Activated B cell treated with CpG ODN at 0.5 μM for 24 hours (primary cell): ENCODE measurements at regions of chr12 and their contacts with region 1.

Region 1: DNA sequence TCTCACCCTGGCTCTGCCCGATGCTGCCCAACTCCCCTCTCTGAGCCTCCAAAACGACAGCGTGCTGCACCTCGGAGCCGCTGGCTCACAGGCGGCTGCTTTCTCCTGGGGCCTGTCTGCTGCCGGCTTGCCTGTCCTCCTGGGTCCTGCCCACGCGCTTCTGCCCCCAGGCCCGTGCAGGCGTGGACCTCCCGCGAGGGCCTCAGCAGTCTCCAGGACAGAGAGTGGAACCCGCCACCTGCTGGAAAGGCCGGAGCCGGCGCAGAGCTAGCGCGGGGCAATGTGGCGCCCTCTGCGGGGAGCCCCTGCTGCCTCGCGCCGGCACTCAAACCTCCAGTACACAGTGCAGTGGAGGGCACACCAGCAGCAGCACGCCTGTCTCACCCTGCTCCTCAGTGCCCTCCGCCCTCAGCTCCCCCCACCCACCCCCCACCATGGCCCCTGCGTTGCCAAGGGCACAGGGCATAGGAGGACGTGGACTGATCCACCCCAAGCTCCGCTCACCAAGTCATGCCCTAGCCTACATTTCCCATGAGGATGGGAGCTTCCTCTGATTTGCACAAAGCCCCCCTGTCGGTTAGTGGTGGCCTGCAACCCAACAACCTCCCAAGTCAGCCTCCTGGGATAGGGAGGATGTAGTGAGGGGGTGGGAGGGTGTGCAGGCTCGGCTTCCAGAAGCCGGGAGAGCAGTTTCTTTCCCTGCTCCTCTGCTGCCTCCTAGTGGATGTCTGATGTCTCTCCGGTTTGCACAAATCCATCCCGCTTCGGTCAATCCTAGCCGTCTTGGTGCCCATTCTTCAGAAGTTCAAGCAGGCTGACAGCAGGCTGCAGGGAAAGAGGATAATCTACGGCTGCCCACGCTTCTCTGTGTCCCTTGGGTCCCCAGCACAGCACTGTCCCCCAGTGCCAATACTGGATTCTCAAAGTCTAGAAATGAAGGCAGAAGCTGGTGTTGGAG is 25.2 kb downstream of the KRT8 start:
- DNase-seq: peak; percentile 49
- ATAC-seq: peak; percentile 90
- H3K4me3 Mint-ChIP-seq: peak overlapping the region; percentile 56
- H3K27ac Mint-ChIP-seq: no peak overlapping the region
- H3K4me1 Mint-ChIP-seq: peaks cover 7% of the 10 kb centered on the region
- H3K27me3 Mint-ChIP-seq: peaks cover 19% of the 10 kb centered on the region
- CTCF ChIP-seq: peak; percentile 28

Region 2: DNA sequence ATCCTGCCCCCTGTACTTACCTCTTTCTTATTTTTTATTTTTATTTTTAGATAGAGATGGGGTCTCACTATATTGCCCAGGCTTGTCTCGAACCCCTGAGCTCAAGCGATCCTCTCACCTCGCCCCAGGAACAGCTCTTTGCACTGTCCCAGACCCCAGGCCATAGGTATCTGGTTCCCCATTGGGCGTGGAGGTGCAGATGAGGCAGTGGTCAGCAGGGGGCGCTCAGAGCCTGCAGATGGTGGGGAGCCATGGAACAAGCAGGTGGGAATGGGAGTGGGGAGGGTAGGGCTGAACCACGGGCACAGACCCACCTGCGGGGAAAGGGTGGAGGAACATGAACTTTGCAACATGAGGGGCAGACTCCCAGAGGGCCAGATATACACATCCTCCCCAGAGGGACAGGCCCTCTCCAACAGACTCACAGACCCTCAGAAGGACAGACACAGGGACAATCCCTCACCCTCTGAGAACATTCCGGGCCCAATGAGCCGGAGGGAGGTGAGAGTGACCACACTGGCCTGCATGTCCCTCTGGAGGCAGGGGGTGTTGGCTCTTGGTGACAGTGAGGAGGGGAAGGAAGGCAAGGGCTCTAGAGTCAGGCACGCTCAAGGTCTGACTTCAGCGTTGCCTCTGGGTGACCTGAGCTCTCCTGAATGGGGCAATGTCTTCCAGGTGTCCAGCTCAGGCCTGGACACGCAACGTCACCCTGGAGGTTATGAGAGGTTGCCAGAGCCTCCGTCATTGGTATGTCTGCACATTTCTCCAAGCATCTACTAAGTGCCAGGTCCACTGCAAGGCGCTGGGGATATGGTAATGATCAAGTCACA is 722.7 kb before region 1 on chr12:
- CTCF ChIA-PET with region 1: interaction called, 3 read pairs
- POLR2A ChIA-PET with region 1: no interaction called
- intact Hi-C with region 1: loop called (anchors 1 kb)
- DNase-seq: peak; percentile 56
- ATAC-seq: peak; percentile 69
- H3K4me3 Mint-ChIP-seq: no peak overlapping the region
- H3K27ac Mint-ChIP-seq: no peak overlapping the region
- H3K4me1 Mint-ChIP-seq: no peaks in the 10 kb centered on the region
- H3K27me3 Mint-ChIP-seq: peaks cover 14% of the 10 kb centered on the region
- CTCF ChIP-seq: no peak

Region 3: DNA sequence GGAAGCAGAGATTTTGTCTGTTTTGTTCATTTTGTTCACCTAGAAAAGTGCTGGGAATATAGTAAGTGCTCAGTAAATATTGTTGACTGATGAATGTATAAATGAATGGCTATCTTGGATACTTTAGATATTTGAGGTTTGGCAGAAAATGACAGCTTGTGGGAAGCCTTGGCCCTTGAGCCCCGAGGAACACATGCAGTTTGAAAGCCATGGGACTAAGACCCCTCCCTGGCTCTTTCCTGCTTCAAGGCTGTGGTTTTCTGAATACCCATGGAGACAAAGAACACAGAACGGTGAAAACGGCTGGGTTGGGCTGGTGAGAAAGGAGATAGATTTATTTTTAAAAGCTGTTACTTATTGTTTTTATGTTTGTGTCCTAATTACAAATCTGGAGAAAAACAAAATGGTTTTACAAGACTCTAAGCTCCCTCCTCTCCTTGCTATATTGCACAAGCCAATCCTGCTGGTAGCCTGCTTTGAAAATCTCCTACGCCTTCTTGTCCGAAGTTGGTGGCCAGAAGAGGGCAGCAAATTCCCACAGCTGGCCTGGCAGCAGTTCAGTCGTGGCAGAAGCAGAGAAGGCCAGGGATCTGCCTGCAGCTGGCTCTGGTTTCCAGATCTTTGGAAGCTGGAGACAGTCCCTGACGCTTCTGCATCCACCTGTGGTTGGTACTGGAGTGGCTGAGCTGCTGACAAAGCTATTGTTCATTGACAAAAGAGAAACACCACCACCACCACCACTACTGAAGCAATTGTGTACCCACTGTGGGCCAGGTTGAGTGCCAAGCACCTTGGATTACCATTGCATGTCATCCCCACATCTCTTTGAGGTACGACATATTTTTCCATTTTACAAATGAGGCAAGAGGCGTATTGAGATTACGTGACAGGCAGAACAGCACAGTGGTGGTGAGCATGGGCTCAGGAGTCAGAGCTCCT is 507.2 kb before region 1 on chr12:
- CTCF ChIA-PET with region 1: interaction called, 5 read pairs
- POLR2A ChIA-PET with region 1: no interaction called
- intact Hi-C with region 1: loop called (anchors 2 kb)
- DNase-seq: no peak
- ATAC-seq: peak; percentile 25
- H3K4me3 Mint-ChIP-seq: no peak overlapping the region
- H3K27ac Mint-ChIP-seq: no peak overlapping the region
- H3K4me1 Mint-ChIP-seq: no peaks in the 10 kb centered on the region
- H3K27me3 Mint-ChIP-seq: peaks cover 23% of the 10 kb centered on the region
- CTCF ChIP-seq: no peak

Region 4: DNA sequence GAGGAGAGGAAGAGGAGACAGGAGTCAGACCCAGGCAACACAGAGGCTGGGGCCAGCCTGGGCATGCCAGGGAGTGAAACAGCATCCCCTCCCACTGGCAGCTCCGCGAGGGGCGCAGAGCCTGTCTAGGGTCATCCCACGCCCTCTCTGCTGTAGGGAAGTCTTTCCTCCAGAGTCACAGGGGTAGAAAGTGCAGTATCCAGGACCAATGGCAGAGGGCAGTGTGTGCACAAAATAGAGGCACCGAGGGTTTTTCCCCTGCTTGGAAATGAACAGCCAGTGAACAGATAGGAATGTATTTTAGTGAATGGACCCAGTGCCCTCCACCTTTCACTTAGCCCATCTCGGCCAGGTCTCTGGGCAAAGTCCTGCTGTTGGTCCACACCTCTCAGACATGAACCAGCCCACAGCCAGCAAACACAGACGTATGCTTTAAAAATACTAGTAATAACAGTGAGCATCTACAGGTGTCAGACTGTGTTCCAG is 296.7 kb before region 1 on chr12:
- CTCF ChIA-PET with region 1: interaction called, 10 read pairs
- POLR2A ChIA-PET with region 1: no interaction called
- intact Hi-C with region 1: loop called (anchors 1 kb)
- DNase-seq: no peak
- ATAC-seq: no peak
- H3K4me3 Mint-ChIP-seq: no peak overlapping the region
- H3K27ac Mint-ChIP-seq: no peak overlapping the region
- H3K4me1 Mint-ChIP-seq: no peaks in the 10 kb centered on the region
- H3K27me3 Mint-ChIP-seq: peaks cover 4% of the 10 kb centered on the region
- CTCF ChIP-seq: no peak